G401 (cell line): ENCODE measurements at regions of chr17 and their contacts with region 1.

Region 1: GRCh38 chr17:79741751-79742588 is 11.2 kb downstream of the ENPP7 start:
- DNase-seq: peak; percentile 67

Region 2: DNA sequence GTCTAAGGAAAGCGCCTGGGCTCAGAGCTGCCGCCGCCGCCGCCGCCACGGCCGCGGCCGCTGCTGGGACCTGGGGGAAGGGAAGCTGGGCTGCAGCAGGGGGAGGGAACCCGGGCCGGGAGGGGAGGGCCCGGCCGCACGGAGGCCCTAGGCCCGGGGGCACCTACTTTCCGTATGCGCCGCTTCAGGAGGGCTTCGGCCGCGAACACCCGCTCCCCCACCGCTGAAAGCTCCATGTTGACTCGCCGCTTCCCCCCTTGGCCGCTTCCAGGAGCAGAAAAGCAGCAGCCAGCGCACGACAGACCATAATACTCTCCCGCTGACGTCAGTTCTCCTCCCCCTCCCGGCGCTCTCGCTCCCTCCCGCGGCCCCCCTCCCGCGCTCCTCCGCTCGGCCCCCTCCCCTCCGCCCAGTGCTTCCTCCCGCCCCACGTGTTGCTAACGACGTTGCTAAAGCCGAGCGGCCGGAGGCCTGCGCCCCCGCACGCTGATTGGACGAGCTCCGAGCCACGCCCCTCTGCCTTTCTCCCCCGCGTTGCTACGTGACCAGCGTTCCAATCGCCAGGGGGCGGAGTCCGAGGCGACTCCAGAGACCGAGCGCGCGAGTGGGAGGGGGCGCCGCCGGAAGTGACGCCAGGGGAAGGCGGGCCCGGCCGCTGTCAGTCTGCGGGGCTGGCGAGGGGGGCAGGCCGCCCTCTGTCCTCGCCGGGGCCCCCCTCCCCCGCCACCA is 55.0 kb after region 1 on chr17 and contains the start of gene CBX8:
- in situ Hi-C with region 1: loop called (anchors 10 kb)
- DNase-seq: peak; percentile 96
- total RNA-seq, gene CBX8: 15.8 and 18.8 TPM in 2 replicates

Region 3: DNA sequence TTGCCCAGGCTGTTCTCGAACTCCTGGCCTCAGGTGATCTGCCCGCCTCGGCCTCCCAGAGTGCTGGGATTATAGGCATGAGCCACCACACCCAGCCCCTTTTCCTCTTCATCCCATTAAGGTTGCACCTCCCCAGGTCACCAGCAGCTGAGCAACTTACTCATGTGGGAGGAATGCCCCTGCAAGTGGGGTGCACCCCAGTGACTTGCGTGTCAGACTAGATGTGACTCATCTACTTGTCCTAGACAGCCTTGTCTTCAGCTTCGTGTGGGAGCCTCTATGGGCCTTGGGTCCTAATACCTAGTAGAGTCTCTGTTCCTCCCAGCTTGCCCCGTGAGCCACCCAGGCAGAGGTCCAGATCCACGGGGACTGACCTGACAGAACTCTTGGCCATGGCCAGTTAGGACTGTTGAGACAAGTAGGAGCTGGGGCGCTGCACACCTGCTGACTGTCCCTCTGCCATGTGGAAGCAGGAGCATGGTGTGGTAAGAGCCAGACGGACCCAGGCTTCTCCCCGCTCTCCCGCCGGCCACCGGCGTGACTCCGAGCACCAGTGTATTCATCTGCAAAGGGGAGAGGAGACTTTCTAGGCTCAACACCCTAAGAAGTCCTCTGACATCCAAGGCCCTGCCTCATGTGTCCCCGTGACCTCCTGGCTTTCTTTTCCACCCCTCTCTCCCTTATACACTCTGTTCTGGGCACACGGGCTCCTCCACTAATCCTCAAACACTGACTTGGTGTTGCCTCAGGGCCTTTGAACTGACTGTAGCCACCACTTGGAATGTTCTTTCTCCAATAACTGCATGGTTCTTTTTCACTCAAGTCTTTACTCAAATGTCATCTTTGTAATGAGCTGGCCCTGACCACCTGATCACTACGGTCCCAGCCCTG is 108.8 kb after region 1 on chr17:
- in situ Hi-C with region 1: no loop called
- DNase-seq: no peak